Psoas muscle (tissue), 8 donors: ENCODE measurements at regions of chr6 and their contacts with region 1.

Region 1: DNA sequence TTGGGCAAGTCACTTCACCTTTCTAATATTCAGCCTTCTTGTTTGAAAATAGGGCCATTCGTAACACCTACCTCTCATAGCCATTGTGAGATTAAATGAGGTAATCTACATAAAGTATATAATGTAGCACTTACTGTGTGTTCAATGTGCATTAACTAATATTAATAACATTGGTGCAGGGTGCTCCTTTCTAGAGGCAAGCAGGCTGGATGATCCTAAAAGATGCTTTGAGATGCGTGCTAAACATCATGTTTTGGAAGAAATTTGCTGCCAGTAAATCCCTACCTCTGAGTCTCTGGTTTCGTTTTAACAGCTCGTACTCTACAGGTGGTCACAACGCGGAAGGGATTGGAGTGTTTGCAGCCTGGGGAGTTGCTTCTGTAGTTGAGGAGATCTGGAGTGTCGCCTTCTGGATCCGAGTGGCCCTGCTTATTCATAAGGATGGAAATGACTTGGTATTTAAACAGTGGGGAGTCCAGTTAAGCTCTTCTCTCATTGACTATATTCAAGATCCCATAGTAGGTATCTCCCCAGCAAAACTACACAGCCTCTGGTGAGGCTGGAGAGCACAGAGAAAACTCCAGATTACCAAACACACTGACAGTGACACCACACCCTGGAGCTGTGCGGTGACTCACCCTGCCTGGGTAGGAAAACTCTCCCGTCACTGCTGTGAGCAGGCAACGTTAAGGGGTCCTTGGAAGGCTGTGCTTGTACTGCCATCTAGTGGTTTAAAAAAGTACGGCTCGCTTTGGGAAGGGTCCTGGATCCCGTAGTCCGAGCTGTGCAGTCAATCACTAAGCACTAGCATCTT is 107.9 kb downstream of the MAP3K7 start:
- DNase-seq: peak; percentile 90 to 94
- ATAC-seq: peak; percentile 100
- H3K4me3 ChIP-seq: no peak overlapping the region
- H3K27ac ChIP-seq: peak overlapping the region; percentile 51
- H3K4me1 ChIP-seq: peaks cover 9% of the 10 kb centered on the region
- H3K27me3 ChIP-seq: no peaks in the 10 kb centered on the region
- CTCF ChIP-seq: peak; percentile 97

Region 2: DNA sequence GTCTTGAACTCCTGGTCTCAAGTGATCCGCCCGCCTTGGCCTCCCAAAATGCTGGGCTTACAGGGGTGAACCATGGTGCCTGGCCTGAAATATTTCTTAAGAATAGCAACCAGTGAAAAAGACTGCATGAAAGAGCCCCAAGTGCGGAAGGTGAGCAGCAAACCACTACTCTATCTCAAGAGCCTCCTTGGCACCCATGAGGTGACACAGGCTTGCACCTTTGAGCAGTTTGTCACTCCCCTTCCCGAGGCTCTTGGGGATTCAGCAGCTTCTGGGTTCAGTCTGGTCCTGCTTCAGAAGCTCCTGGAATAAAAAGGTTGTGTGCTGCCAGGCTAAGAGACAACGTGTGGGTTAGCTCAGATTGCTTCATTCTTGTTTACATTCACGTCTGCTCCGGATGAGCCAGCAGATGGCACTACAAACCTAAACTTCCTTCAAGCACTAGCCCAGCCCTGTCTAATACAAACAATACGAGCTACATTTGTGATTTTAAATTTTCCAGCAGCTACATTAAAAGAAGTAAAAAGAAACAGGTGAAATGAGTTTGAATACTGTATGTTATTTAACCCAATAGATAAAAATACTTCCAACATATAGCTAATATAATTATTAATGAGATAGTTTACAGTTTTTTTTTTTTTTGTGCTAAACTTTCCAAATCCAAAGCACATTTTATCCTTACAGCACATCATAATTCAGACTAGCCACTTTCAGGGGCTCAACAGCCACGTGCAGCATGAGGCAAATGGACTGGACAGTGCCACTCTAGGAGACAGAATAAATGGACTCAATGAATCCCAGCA is 538.6 kb before region 1 on chr6:
- intact Hi-C with region 1: loop called (anchors 1 to 2 kb)
- DNase-seq: peak in 1 of 2 donors; percentile 48
- ATAC-seq: peak; percentile 87 to 96 (median 90)
- H3K4me3 ChIP-seq: no peak overlapping the region
- H3K27ac ChIP-seq: no peak overlapping the region
- H3K4me1 ChIP-seq: peaks cover 14% of the 10 kb centered on the region
- H3K27me3 ChIP-seq: no peaks in the 10 kb centered on the region
- CTCF ChIP-seq: peak; percentile 68

Region 3: GRCh38 chr6:89970609-89971337 is 508.2 kb before region 1 on chr6:
- intact Hi-C with region 1: loop called in 1 of 2 experiments (anchors 10 kb)
- DNase-seq: peak; percentile 23 to 54
- ATAC-seq: peak; percentile 43 to 84 (median 65)
- H3K4me3 ChIP-seq: no peak overlapping the region
- H3K27ac ChIP-seq: no peak overlapping the region
- H3K4me1 ChIP-seq: peaks cover 32% of the 10 kb centered on the region
- H3K27me3 ChIP-seq: no peaks in the 10 kb centered on the region
- CTCF ChIP-seq: peak; percentile 57

Region 4: DNA sequence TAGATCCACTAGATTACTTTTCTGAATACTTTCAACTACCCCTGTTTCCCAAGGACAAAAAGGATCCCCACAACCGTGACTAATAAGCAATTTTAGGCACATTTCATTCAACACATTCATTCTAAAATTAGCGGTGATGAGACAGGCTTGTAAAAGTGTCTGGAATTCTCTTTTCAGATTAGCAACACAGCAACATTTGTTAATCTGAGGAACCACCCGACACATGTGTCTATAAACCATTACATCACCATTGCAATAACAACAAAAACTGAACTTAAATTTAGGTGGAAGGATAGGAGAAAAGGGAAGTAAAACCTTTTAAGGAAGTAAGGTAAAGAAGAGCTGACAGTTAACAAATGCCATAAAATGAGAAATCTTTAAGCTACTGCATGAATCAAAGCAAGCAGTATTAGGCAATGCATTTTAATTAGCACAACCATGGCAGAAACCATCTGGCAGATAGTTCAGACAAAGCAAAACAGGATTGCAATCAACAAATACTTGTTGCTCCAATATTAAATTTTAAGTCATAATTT is 58.8 kb after region 1 on chr6:
- intact Hi-C with region 1: no loop called
- DNase-seq: no peak
- ATAC-seq: peak in 3 of 4 donors; percentile 29 to 53 (median 42)
- H3K4me3 ChIP-seq: no peak overlapping the region
- H3K27ac ChIP-seq: no peak overlapping the region
- H3K4me1 ChIP-seq: no peaks in the 10 kb centered on the region
- H3K27me3 ChIP-seq: no peaks in the 10 kb centered on the region
- CTCF ChIP-seq: no peak